ENCODE measurements at regions of chr7 and their contacts with region 1.

Region 1: GRCh38 chr7:32846701-32847100 is 44.9 kb downstream of the KBTBD2 start:
- DNase-seq: peak; percentile 93
- ATAC-seq: peak; percentile 100
- H3K4me3 ChIP-seq: no peak overlapping the region
- H3K27ac ChIP-seq: no peak overlapping the region
- H3K4me1 ChIP-seq: peaks cover 4% of the 10 kb centered on the region
- H3K27me3 ChIP-seq: no peaks in the 10 kb centered on the region
- CTCF ChIP-seq: peak; percentile 92

Region 2: GRCh38 chr7:31796375-31796774 is 1050.3 kb before region 1 on chr7:
- intact Hi-C with region 1: no loop called
- DNase-seq: no peak
- ATAC-seq: no peak
- H3K4me3 ChIP-seq: no peak overlapping the region
- H3K27ac ChIP-seq: no peak overlapping the region
- H3K4me1 ChIP-seq: no peaks in the 10 kb centered on the region
- H3K27me3 ChIP-seq: no peaks in the 10 kb centered on the region
- CTCF ChIP-seq: no peak

Region 3: DNA sequence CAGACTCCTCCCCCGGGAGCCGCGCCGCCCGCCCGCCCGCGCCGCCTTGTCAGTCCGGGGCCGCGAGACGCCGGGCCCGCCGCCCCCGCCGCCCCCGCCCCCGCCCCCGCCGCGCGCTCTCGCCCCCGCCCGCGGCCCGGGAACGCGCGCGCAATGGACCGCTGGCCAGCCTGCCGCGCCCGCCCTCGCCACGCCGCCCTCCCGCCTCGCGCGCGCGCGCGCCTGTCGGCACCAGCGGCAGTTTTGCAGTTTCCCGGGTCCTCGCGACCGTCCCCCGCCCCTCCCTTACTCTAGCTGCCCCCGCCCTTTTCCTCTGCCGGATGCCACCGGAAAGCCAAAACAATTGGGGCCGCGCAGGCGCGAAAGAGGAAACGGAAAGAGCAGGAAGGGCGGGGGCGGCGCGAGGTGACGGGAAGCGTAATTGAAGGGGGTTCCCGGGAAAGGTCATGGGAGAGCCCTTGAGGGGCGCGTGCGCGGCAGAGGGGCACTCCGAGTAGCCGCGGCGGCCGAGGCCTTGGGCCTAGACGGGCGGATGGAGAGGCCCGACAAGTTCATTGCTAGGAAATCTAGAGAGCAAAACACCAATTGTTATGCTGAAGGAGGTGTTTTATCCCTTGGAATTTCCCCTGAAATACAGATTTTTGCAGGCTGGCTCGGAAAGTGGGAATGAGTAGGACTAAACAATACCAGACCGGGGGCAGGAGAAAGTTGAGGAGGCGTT is 45.3 kb after region 1 on chr7:
- intact Hi-C with region 1: no loop called
- DNase-seq: peak; percentile 99
- ATAC-seq: peak; percentile 90
- H3K4me3 ChIP-seq: peak overlapping the region; percentile 72
- H3K27ac ChIP-seq: peak overlapping the region; percentile 95
- H3K4me1 ChIP-seq: peaks cover 44% of the 10 kb centered on the region
- H3K27me3 ChIP-seq: no peaks in the 10 kb centered on the region
- CTCF ChIP-seq: no peak

Region 4: DNA sequence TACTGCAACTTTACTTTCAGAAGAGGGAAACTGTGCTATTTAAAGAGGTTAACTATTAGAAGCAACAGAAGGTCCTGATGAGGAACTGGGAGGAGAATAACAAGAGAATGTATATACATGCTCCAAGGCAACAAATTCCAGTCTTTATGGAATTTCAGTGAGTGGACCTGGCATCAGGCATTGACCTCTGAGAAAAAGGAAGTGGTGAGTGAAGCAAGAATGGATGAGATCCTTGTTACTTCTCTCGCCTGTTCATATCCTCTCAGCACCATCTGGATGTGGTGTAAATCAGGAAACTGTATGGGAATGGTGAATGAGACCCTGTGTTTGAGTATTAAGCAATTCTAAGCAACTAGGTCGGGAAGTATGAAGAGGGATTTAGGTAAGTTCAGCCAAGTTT is 75.2 kb after region 1 on chr7:
- intact Hi-C with region 1: loop called (anchors 10 kb)
- DNase-seq: no peak
- ATAC-seq: peak; percentile 49
- H3K4me3 ChIP-seq: no peak overlapping the region
- H3K27ac ChIP-seq: no peak overlapping the region
- H3K4me1 ChIP-seq: no peaks in the 10 kb centered on the region
- H3K27me3 ChIP-seq: no peaks in the 10 kb centered on the region
- CTCF ChIP-seq: no peak

Measured in upper lobe of right lung (tissue), 1 donor.